ENCODE measurements at regions of chr19 and their contacts with region 1.

Region 1: DNA sequence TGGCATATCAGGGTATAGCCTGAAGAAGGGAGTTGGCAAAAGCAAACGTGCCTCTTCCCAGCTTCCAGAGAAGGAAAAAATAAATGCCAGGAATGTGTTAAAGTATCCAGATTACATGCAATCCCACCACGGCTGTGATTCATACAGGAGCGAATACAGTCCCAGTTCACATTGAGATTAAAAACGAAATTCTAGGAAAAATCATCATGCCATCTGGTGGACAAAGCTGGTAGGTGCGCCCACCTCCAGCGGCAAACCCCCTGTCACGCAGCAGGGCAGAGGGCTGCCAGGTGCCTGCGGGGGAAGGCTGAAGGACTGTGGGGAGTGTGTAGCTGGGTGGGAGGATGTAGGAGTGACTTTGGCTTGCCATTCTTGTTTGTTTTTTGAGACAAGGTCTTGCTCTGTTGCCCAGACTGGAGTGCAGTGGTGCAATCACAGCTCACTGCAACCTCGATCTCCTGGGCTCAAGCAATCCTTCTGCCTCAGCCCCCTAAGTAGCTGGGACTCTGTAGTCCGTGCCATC is 6.4 kb upstream of the DMWD start:
- DNase-seq: peak; percentile 65
- ATAC-seq: peak; percentile 90
- H3K4me3 ChIP-seq: no peak overlapping the region
- H3K27ac ChIP-seq: no peak overlapping the region
- H3K4me1 ChIP-seq: no peaks in the 10 kb centered on the region
- H3K27me3 ChIP-seq: no peaks in the 10 kb centered on the region
- CTCF ChIP-seq: peak; percentile 70

Region 2: GRCh38 chr19:45779231-45780145 is 19.6 kb before region 1 on chr19:
- CTCF ChIA-PET with region 1: interaction called, 18 read pairs
- POLR2A ChIA-PET with region 1: no interaction called
- intact Hi-C with region 1: no loop called
- DNase-seq: peak; percentile 86
- ATAC-seq: peak; percentile 72
- H3K4me3 ChIP-seq: peak overlapping the region; percentile 68
- H3K27ac ChIP-seq: no peak overlapping the region
- H3K4me1 ChIP-seq: peaks cover 49% of the 10 kb centered on the region
- H3K27me3 ChIP-seq: no peaks in the 10 kb centered on the region
- CTCF ChIP-seq: peak; percentile 77

Region 3: GRCh38 chr19:45809643-45810159 is 10.6 kb after region 1 on chr19:
- CTCF ChIA-PET with region 1: interaction called, 11 read pairs
- POLR2A ChIA-PET with region 1: no interaction called
- intact Hi-C with region 1: no loop called
- DNase-seq: peak; percentile 58
- ATAC-seq: peak; percentile 51
- H3K4me3 ChIP-seq: no peak overlapping the region
- H3K27ac ChIP-seq: peak overlapping the region; percentile 54
- H3K4me1 ChIP-seq: peaks cover 7% of the 10 kb centered on the region
- H3K27me3 ChIP-seq: no peaks in the 10 kb centered on the region
- CTCF ChIP-seq: no peak

Region 4: GRCh38 chr19:45817010-45817724 is 18.1 kb after region 1 on chr19:
- CTCF ChIA-PET with region 1: no interaction called
- POLR2A ChIA-PET with region 1: no interaction called
- intact Hi-C with region 1: loop called (anchors 1 kb)
- DNase-seq: peak; percentile 91
- ATAC-seq: peak; percentile 90
- H3K4me3 ChIP-seq: no peak overlapping the region
- H3K27ac ChIP-seq: no peak overlapping the region
- H3K4me1 ChIP-seq: no peaks in the 10 kb centered on the region; the same call in 1 of the 2 replicates
- H3K27me3 ChIP-seq: no peaks in the 10 kb centered on the region
- CTCF ChIP-seq: peak; percentile 92

Region 5: GRCh38 chr19:45834970-45835369 is 35.9 kb after region 1 on chr19:
- CTCF ChIA-PET with region 1: no interaction called
- POLR2A ChIA-PET with region 1: no interaction called
- intact Hi-C with region 1: no loop called
- DNase-seq: no peak
- ATAC-seq: no peak
- H3K4me3 ChIP-seq: no peak overlapping the region
- H3K27ac ChIP-seq: no peak overlapping the region
- H3K4me1 ChIP-seq: no peaks in the 10 kb centered on the region
- H3K27me3 ChIP-seq: no peaks in the 10 kb centered on the region
- CTCF ChIP-seq: no peak

Measured in PC-3 (cell line).